ENCODE measurements at regions of chr7 and their contacts with region 1.

Region 1: DNA sequence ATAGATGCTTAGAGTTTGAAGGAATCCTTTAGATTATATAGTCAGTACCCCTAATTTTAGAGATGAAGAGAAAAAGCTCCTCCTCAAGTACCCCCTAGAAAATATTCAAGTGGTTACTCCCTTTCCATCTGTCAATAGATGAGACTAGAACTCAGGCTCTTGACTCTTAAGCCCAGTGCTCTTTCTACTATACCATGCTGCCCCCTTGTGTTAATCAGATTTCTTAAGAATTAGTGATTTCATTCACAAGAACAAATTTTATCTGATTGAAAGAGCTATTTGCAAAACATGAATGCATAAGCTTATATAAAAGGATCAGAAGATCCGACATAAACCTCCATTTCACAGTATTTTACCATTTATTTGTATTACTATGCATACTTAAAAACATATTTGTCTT is 179.3 kb downstream of the TFEC start:
- DNase-seq: no peak
- H3K4me3 ChIP-seq: no peak overlapping the region
- H3K27ac ChIP-seq: no peak overlapping the region
- H3K4me1 ChIP-seq: no peaks in the 10 kb centered on the region
- H3K27me3 ChIP-seq: no peaks in the 10 kb centered on the region
- CTCF ChIP-seq: peak in 1 of 3 experiments; percentile 12
- POLR2A ChIP-seq: no peak

Region 2: GRCh38 chr7:114865564-114865963 is 985.7 kb before region 1 on chr7:
- intact Hi-C with region 1: loop called (anchors 10 kb)
- DNase-seq: no peak
- H3K4me3 ChIP-seq: no peak overlapping the region
- H3K27ac ChIP-seq: no peak overlapping the region
- H3K4me1 ChIP-seq: no peaks in the 10 kb centered on the region
- H3K27me3 ChIP-seq: no peaks in the 10 kb centered on the region
- CTCF ChIP-seq: peak; percentile 24 to 55 (median 34)
- POLR2A ChIP-seq: no peak

Region 3: DNA sequence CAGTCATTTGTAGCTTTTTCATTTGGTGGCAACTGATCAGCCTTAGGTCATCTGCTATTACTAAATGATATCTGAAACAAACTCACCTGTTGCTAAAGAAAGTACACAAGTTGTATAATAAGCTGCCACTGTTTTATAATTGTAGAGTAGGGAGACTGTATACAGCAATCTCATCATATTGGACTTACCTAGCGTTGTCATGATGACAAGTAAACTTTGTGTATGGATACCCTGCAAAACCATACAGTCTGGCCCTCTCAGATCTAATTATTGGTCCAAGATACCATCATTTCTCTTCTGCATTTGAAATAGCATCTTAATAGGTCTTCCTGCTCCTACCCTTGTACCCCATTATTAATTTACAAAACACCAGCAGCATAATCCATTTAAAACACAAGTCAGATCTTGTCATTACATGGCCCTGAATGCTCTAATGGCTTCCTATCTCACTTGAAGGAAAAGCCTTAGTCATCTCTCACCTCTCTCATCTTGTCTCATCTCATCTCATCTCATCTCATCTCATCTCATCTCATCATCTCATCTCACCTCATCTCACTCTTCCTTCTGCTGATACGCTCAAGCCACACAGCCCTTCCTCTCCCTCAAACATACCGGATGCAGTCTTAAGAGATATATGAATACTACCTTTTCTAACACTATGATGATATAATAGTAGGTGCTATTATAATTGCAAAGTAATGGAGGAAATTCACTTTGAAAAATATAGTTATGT is 388.8 kb before region 1 on chr7:
- intact Hi-C with region 1: no loop called
- DNase-seq: no peak
- H3K4me3 ChIP-seq: no peak overlapping the region
- H3K27ac ChIP-seq: no peak overlapping the region
- H3K4me1 ChIP-seq: no peaks in the 10 kb centered on the region
- H3K27me3 ChIP-seq: no peaks in the 10 kb centered on the region
- CTCF ChIP-seq: no peak
- POLR2A ChIP-seq: no peak

Region 4: DNA sequence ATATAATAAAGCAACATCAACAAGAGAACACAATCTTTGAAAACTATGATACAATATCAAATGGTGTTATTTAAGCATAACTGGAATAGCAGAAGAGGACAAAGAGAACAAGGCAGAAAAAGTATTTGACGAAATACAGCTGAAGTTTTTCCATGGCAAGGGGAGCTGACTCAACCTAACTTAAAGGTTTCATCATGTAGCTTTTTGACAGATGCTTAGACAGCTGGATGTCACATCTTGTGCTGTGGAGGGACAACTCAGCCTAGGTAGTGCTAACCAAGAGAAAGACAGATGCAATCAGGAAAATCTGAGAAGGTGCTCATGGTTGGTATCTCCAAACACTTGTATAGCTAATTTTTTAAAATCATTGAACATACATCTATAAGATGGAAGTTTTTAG is 28.9 kb before region 1 on chr7:
- intact Hi-C with region 1: no loop called
- DNase-seq: no peak
- H3K4me3 ChIP-seq: no peak overlapping the region
- H3K27ac ChIP-seq: no peak overlapping the region
- H3K4me1 ChIP-seq: no peaks in the 10 kb centered on the region
- H3K27me3 ChIP-seq: no peaks in the 10 kb centered on the region
- CTCF ChIP-seq: no peak
- POLR2A ChIP-seq: no peak

Region 5: DNA sequence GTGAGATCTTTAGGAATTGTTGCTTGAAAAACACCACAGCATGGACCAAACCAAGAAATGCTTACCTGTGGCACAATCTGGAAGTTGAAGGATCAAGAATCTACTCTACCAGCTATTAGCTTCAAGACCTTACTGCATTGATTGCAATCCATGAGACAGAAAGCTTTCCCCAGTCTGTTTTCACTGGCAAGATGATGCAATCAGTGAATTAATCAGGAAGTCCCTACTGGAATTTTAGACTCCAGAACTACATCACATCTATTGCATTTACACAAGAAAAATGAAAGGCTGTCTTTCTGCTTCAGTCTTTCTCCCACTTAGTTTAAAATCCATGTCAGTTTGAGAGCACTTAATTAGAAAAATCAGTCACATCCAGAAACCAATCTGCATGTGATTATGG is 12.5 kb before region 1 on chr7:
- intact Hi-C with region 1: no loop called
- DNase-seq: no peak
- H3K4me3 ChIP-seq: no peak overlapping the region
- H3K27ac ChIP-seq: no peak overlapping the region
- H3K4me1 ChIP-seq: no peaks in the 10 kb centered on the region
- H3K27me3 ChIP-seq: no peaks in the 10 kb centered on the region
- CTCF ChIP-seq: no peak
- POLR2A ChIP-seq: no peak

Measured in vagina (tissue), 2 donors.